Dendritic cell treated with granulocyte-macrophage colony-stimulating factor and Interleukin-4, amounts not matched to agents 40 ng/mL and 50 ng/mL, for 4 days (primary cell): ENCODE measurements at regions of chr11 and their contacts with region 1.

Region 1: GRCh38 chr11:64027651-64028397 is 7.9 kb upstream of the FLRT1 start:
- H3K4me3 Mint-ChIP-seq: peak overlapping the region; percentile 46
- H3K27ac Mint-ChIP-seq: peak overlapping the region; percentile 89
- H3K4me1 Mint-ChIP-seq: peaks cover 60% of the 10 kb centered on the region
- H3K27me3 Mint-ChIP-seq: peaks cover 28% of the 10 kb centered on the region

Region 2: GRCh38 chr11:64007629-64008282 is 20.1 kb before region 1 on chr11:
- intact Hi-C with region 1: loop called (anchors 2 kb)
- H3K4me3 Mint-ChIP-seq: peak overlapping the region; percentile 87
- H3K27ac Mint-ChIP-seq: peak overlapping the region; percentile 81
- H3K4me1 Mint-ChIP-seq: peaks cover 33% of the 10 kb centered on the region
- H3K27me3 Mint-ChIP-seq: peaks cover 76% of the 10 kb centered on the region

Region 3: DNA sequence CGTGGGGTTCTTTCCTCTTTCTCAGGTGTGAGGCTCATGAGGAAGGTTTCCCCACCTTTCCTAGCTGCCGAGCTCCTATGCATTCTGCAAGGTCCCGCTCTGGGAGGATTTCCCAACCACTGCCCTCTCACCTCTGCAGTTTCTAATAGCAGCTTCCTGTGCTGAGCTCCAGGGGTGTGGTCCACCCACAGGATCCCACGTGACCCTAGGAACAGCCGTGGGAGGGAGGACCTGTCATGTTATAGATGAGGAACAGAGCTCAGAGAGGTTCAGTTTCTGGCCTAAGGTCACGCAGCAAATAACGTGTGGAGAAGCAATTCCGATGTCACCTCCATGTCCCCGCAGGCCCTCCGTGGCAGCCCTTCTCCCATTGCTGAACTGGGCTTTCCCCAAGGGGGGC is 46.4 kb after region 1 on chr11:
- intact Hi-C with region 1: no loop called
- H3K4me3 Mint-ChIP-seq: no peak overlapping the region
- H3K27ac Mint-ChIP-seq: no peak overlapping the region
- H3K4me1 Mint-ChIP-seq: peaks cover 10% of the 10 kb centered on the region
- H3K27me3 Mint-ChIP-seq: peaks cover 13% of the 10 kb centered on the region